Caco-2 (cell line): ENCODE measurements at regions of chr3 and their contacts with region 1.

Region 1: DNA sequence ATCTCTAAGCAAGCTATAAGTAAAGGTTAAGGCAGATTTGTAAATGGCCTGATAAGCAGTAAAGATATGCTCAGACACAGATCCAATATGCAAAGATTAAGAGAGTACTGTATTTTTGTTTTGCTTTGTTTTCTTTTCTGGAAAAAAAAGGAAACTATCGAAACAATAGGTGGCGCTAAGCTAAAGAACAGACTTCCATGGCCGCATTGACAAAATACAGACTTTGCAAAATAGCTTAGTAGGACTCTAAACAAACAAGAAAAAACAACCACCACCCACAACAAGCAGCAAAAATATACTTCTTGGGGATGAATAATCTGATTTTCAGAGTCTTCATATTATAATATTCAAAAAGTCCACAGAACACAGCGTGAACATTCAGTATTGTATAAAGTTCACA is 758.4 kb upstream of the ROBO1 start:
- DNase-seq: peak in 1 of 2 experiments; percentile 5
- H3K4me3 ChIP-seq: no peak overlapping the region
- H3K4me3 Mint-ChIP-seq: no peak overlapping the region
- H3K27ac Mint-ChIP-seq: no peak overlapping the region
- H3K4me1 ChIP-seq: no peaks in the 10 kb centered on the region
- H3K4me1 Mint-ChIP-seq: no peaks in the 10 kb centered on the region
- H3K27me3 ChIP-seq: no peaks in the 10 kb centered on the region
- H3K27me3 Mint-ChIP-seq: peaks cover 3% of the 10 kb centered on the region
- CTCF ChIP-seq: peak; percentile 40 to 46

Region 2: GRCh38 chr3:80465746-80466145 is 60.4 kb before region 1 on chr3:
- CTCF ChIA-PET with region 1: no interaction called
- POLR2A ChIA-PET with region 1: no interaction called
- intact Hi-C with region 1: no loop called
- DNase-seq: no peak
- H3K4me3 ChIP-seq: no peak overlapping the region
- H3K4me3 Mint-ChIP-seq: no peak overlapping the region
- H3K27ac Mint-ChIP-seq: no peak overlapping the region
- H3K4me1 ChIP-seq: no peaks in the 10 kb centered on the region
- H3K4me1 Mint-ChIP-seq: no peaks in the 10 kb centered on the region
- H3K27me3 ChIP-seq: no peaks in the 10 kb centered on the region
- H3K27me3 Mint-ChIP-seq: peaks cover 7% of the 10 kb centered on the region
- CTCF ChIP-seq: no peak

Region 3: DNA sequence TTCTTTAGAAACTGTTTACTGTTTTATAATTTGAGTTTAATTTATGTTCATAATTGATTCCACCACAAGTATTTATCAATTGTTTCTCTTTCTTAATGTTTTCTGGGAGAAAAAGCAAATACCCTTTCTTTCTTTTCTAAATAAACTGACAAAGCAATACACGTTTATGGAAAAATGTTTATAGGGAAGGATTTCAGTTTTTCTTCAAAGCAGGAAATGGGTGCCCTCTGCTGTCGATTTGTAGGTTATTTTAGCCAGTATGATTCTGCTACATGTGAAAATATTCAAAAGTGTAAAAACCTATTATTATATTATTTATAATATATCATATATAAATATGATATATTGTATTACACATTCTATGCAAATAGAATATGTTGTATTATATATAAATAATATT is 162.7 kb after region 1 on chr3:
- CTCF ChIA-PET with region 1: no interaction called
- POLR2A ChIA-PET with region 1: no interaction called
- intact Hi-C with region 1: loop called (anchors 1 kb)
- DNase-seq: peak in 1 of 2 experiments; percentile 19
- H3K4me3 ChIP-seq: no peak overlapping the region
- H3K4me3 Mint-ChIP-seq: no peak overlapping the region
- H3K27ac Mint-ChIP-seq: no peak overlapping the region
- H3K4me1 ChIP-seq: no peaks in the 10 kb centered on the region
- H3K4me1 Mint-ChIP-seq: no peaks in the 10 kb centered on the region
- H3K27me3 ChIP-seq: no peaks in the 10 kb centered on the region
- H3K27me3 Mint-ChIP-seq: no peaks in the 10 kb centered on the region
- CTCF ChIP-seq: peak; percentile 30 to 48